Activated naive CD4-positive, alpha-beta T cell treated with anti-CD3 and anti-CD28 coated beads for 36 hours (primary cell): ENCODE measurements at regions of chr16 and their contacts with region 1.

Region 1: DNA sequence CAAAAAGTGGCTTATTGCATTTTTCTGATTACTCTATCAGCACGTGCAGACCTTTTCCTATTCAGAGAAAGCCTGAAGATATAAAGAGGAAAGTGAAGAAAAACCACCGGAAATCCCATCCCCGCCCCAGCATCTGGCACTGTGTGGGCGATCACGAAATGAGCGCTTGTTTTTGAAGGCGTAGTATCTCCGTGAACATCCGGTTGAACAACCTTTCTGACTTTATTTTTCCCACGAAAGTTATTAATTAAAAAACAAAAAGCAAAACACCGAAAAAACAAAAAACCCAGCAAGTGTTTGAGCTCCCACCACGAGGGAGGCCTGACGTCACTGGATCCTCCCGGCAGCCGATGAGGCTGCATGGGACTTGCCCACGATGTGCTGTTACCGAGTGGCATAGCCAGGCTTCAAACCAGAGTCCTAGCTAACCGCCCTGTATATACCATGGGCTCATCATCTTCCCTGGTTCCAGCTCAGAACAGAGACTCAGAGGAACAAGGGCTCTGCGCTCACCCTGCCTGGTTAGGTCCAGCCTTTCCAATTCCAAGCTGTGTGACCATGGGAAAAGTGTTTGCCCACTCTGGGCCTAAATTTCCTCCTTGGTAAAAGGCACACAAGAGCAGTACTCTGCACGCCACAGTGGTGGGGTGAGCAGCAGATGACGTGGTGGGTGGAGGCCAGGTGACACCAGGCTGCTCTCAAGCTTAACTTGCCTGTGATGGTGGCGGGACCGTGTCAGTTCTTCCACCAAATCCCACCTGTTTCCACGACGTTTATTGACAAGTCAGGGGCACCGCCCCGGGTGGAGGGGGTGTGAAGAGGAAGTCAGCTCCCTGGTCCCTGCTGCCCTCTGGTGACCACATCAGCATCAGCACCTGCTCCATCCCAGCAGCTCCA is 34.3 kb upstream of the IL21R start:
- DNase-seq: peak; percentile 97
- H3K4me3 Mint-ChIP-seq: peak overlapping the region; percentile 53
- H3K27ac Mint-ChIP-seq: peak overlapping the region; percentile 99
- H3K4me1 Mint-ChIP-seq: peaks cover 76% of the 10 kb centered on the region
- H3K27me3 Mint-ChIP-seq: no peaks in the 10 kb centered on the region

Region 2: DNA sequence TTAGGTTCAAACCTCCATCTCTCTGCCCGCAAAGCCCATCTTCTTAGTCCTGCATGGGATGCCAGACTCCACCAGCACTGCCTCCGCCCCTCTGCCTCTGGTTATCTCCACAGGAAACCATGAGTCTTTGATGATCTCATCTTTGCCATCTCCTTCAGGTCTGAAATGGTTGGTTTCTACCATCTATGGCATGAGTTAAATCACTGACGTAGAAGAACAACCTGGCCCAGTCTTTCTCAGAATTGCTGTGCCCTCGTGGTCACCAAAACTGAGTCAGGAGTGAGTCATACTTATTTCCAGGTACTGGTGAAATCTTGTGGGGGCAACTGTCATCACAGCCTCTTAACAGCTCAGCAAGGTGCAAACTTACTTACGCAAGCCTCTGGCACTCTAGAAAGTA is 769.6 kb before region 1 on chr16:
- CTCF ChIA-PET with region 1: interaction called, 3 read pairs
- intact Hi-C with region 1: loop called (anchors 1 kb)
- DNase-seq: peak; percentile 86
- H3K4me3 Mint-ChIP-seq: peak overlapping the region; percentile 17
- H3K27ac Mint-ChIP-seq: peak overlapping the region; percentile 82
- H3K4me1 Mint-ChIP-seq: peaks cover 48% of the 10 kb centered on the region
- H3K27me3 Mint-ChIP-seq: peaks cover 17% of the 10 kb centered on the region

Region 3: GRCh38 chr16:26905336-26905735 is 462.4 kb before region 1 on chr16:
- CTCF ChIA-PET with region 1: no interaction called
- intact Hi-C with region 1: no loop called
- DNase-seq: no peak
- H3K4me3 Mint-ChIP-seq: no peak overlapping the region
- H3K27ac Mint-ChIP-seq: no peak overlapping the region
- H3K4me1 Mint-ChIP-seq: no peaks in the 10 kb centered on the region
- H3K27me3 Mint-ChIP-seq: peaks cover 19% of the 10 kb centered on the region

Region 4: GRCh38 chr16:27169511-27170071 is 198.1 kb before region 1 on chr16:
- CTCF ChIA-PET with region 1: interaction called, 14 read pairs
- intact Hi-C with region 1: loop called (anchors 1 kb)
- DNase-seq: peak; percentile 92
- H3K4me3 Mint-ChIP-seq: no peak overlapping the region
- H3K27ac Mint-ChIP-seq: peak overlapping the region; percentile 87
- H3K4me1 Mint-ChIP-seq: peaks cover 55% of the 10 kb centered on the region
- H3K27me3 Mint-ChIP-seq: no peaks in the 10 kb centered on the region

Region 5: DNA sequence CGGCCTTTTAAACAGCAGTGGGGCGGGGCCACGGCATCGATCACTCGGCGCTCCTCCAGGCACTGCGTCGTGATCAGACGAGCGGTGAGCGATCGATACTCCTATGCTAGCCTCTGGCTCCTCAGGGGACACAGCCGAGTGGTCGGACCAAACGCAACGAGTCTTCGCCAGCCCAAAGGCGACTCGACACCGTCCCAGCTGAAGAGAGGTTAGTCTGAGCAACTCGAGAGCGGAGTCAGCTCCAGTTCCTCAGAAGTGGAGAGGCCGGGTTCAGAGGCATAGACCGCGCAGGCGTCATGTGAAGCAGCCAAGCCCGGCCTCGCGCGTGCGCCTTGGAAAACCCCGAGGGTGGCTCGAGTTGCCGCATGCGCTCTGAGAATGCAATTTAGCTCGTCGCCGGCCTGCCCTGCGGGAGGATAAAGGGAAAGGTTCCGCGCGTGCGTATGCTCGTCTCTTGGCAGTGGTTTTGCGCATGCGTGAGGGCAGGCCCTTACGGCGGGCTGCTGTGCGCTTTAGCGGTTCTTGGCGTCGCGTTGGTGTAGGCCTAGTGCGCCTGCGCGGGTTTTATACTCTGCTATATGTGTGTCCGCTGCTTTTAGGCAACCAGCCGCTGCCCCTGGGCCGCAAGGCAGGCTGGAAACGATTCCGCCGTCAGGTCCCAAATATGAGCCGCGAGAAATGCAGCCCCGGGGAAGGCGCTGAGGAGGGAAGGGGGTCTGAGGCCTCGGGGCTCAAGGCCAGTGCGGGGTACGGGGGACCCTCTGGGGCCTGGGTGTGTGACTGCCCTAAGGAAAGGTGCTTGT is 164.1 kb before region 1 on chr16 and contains the start of gene KDM8:
- CTCF ChIA-PET with region 1: interaction called, 6 read pairs
- intact Hi-C with region 1: loop called (anchors 1 kb)
- DNase-seq: peak; percentile 100
- H3K4me3 Mint-ChIP-seq: peak within 1 kb of the TSS; percentile 99
- H3K27ac Mint-ChIP-seq: peak within 1 kb of the TSS; percentile 100
- H3K4me1 Mint-ChIP-seq: peaks cover 50% of the 10 kb centered on the region
- H3K27me3 Mint-ChIP-seq: no peaks in the 10 kb centered on the region
- total RNA-seq, gene KDM8: 11.3 to 13.9 TPM

Region 6: GRCh38 chr16:27253526-27253930 is 114.2 kb before region 1 on chr16:
- CTCF ChIA-PET with region 1: interaction called, 5 read pairs
- intact Hi-C with region 1: loop called (anchors 5 kb)
- DNase-seq: no peak
- H3K4me3 Mint-ChIP-seq: peak overlapping the region; percentile 44
- H3K27ac Mint-ChIP-seq: peak overlapping the region; percentile 92
- H3K4me1 Mint-ChIP-seq: peaks cover 91% of the 10 kb centered on the region
- H3K27me3 Mint-ChIP-seq: no peaks in the 10 kb centered on the region

Region 7: DNA sequence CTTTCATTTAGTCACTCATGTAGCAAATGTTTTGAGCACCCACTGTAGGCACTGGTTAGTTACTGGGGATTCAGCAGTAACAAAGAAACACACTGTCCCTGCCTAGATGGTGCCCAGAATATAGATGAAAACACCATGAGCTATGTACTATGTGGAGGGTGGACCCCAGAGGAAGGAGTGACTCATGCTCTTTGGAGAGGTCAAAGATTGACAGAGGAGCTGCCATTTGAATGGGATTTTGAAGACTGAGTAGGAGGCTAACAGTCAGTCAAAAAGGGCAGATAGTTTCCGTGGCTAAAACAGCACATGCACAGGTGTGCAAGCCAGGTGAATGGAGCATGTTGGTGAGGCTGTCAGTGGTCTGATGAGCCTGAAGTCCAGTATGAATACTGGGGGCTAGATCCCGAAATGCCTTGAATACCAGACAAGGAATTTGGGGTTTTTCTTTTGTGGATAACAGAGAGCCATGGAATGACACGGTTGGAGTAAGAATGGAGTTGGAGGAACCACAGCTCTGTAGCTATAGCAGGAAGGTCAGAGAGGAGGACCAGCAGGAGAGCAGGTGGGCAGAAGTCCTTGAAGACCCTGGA is 40.4 kb after region 1 on chr16:
- CTCF ChIA-PET with region 1: interaction called, 20 read pairs
- intact Hi-C with region 1: loop called (anchors 1 kb)
- DNase-seq: peak; percentile 78
- H3K4me3 Mint-ChIP-seq: peak overlapping the region; percentile 98
- H3K27ac Mint-ChIP-seq: peak overlapping the region; percentile 100
- H3K4me1 Mint-ChIP-seq: peaks cover 65% of the 10 kb centered on the region
- H3K27me3 Mint-ChIP-seq: no peaks in the 10 kb centered on the region